Activated CD4-positive, alpha-beta memory T cell treated with anti-CD3 and anti-CD28 coated beads for 36 hours (primary cell): ENCODE measurements at regions of chr17 and their contacts with region 1.

Region 1: GRCh38 chr17:50200457-50201275 is 765 bp downstream of the COL1A1 start:
- DNase-seq: peak; percentile 89
- H3K4me3 Mint-ChIP-seq: peak overlapping the region; percentile 67
- H3K27ac Mint-ChIP-seq: no peak overlapping the region
- H3K4me1 Mint-ChIP-seq: peaks cover 19% of the 10 kb centered on the region
- H3K27me3 Mint-ChIP-seq: peaks cover 49% of the 10 kb centered on the region

Region 2: DNA sequence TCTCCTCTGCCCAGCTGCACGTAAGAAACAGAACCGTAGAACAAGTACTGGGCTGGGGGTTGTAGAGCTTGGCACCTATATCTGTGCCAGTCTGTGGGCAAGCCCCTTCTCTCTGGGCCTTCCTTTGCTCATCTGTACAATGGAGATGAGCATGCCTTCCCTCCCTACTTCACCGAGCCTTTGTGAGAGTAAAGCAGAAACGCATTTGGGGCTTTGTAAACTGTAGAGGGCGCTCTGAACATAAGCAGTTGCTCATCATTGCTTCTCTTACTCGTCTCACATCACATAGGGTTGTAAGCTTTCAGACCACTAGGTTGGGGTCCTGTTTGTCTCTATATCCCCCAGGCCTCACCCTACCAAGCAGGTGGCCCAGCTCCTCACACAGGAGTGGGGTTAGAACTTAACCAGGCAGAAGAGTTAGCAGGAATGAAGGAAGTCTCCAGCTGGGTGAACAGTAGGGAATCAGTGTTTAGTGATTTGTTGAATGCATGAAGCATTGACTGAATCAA is 85.8 kb before region 1 on chr17:
- CTCF ChIA-PET with region 1: interaction called, 9 read pairs
- POLR2A ChIA-PET with region 1: no interaction called
- intact Hi-C with region 1: loop called (anchors 1 kb)
- DNase-seq: peak; percentile 53
- H3K4me3 Mint-ChIP-seq: no peak overlapping the region
- H3K27ac Mint-ChIP-seq: no peak overlapping the region
- H3K4me1 Mint-ChIP-seq: peaks cover 10% of the 10 kb centered on the region
- H3K27me3 Mint-ChIP-seq: peaks cover 24% of the 10 kb centered on the region

Region 3: DNA sequence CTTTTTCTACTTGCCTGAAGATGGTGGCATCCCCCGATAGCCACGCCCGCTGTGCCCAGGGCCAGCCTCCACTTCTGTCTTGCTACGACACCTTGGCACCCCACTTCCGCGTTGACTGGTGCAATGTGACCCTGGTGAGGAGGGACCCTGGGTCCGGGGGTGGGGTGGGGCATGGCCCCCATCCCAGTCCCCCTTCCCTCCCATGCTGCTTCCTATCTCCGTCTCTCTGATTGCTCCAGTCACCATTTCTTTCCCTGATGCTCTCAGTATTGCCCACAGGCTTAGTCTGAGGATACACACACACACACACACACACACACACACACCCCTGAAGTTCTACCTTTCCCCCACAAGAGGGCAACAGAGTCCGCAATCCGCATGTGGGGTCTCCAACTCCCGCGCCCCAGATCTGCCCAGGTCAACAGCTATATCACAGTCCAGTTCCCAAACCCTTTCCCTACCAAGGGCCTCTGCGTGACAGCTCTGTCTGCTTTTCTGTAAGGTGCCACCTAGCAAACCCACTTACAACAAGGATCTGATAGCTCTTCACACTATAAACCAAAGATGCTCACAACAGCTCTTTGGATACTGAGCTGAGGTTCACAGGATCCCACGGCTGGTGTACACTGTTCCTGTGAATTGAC is 31.4 kb before region 1 on chr17:
- CTCF ChIA-PET with region 1: interaction called, 42 read pairs
- POLR2A ChIA-PET with region 1: interaction called, 3 read pairs
- intact Hi-C with region 1: loop called (anchors 1 kb)
- DNase-seq: peak; percentile 68
- H3K4me3 Mint-ChIP-seq: peak overlapping the region; percentile 52
- H3K27ac Mint-ChIP-seq: no peak overlapping the region
- H3K4me1 Mint-ChIP-seq: peaks cover 19% of the 10 kb centered on the region
- H3K27me3 Mint-ChIP-seq: no peaks in the 10 kb centered on the region

Region 4: DNA sequence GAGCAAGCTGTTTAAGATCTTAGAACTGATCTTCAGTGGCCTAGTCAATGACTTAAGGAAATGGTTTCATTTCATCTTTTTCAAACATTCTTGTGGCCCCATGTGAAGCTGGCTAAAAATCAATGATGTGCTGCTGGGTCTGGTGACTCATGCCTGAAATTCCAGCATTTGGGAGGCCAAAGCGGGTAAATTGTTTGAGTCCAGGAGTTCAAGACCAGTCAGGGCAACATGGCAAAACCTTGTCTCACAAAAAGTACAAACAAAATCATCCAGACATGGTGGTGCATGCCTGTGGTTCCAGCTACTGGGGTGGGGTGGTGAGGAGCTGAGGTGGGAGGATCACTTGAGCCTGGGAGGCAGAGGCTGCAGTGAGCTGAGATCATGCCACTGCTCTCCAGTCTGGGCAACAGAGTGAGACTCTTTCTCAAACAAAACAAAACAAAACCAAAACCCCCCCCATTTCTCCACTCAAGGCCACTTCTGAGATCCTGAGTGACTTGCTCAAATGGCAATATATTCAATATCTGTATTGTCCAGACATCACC is 18.2 kb after region 1 on chr17:
- CTCF ChIA-PET with region 1: interaction called, 70 read pairs
- POLR2A ChIA-PET with region 1: interaction called, 3 read pairs
- intact Hi-C with region 1: no loop called
- DNase-seq: no peak
- H3K4me3 Mint-ChIP-seq: no peak overlapping the region
- H3K27ac Mint-ChIP-seq: no peak overlapping the region
- H3K4me1 Mint-ChIP-seq: peaks cover 10% of the 10 kb centered on the region
- H3K27me3 Mint-ChIP-seq: peaks cover 1% of the 10 kb centered on the region

Region 5: GRCh38 chr17:50297407-50297865 is 96.8 kb after region 1 on chr17:
- CTCF ChIA-PET with region 1: interaction called, 254 read pairs
- POLR2A ChIA-PET with region 1: no interaction called
- intact Hi-C with region 1: loop called (anchors 1 kb)
- DNase-seq: peak; percentile 90
- H3K4me3 Mint-ChIP-seq: no peak overlapping the region
- H3K27ac Mint-ChIP-seq: no peak overlapping the region
- H3K4me1 Mint-ChIP-seq: peaks cover 8% of the 10 kb centered on the region
- H3K27me3 Mint-ChIP-seq: peaks cover 15% of the 10 kb centered on the region

Region 6: DNA sequence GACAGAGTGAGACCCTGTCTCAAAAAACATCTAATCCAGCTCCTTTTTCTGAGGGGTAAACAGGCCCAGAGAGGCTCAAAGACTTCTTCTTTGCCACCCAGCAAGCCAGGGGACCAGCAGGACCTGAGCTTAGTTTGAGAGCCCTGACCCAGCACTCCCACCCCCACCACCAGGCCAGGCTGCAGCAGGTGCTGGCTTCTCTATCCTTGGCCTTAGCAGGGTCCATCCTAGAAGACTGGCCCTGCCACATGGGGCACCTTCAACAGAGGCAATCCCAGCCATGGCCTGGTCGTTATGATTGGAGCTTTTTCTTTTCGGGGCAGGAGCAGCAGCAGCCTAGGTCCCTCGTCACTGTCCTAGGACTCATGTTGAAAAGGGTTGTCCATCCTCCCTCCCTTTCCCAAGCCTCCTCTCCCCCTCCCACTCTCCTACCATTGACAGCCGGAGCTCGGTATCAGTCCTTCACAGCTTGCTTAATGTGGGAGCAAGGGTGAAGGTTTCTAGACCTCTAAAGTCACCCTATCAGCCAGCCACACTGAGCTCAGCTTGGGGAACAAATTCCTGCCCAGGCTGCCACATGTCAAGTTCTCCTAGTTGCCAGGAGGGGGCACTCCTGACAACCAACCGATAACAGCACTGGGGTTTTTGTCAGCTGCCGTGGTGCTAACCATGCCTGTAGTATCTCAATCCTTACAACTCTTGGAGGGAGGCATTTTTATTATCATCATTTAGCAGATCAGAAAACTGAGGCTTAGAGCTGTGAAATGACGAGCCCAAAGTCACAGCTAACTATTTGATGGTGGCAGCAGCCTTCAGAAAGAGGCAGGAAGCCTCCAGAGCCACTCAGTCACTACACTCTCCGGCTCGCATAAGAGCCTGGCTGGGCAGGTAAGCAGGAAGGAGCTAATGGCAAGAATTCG is 161.2 kb after region 1 on chr17:
- CTCF ChIA-PET with region 1: interaction called, 13 read pairs
- POLR2A ChIA-PET with region 1: no interaction called
- intact Hi-C with region 1: no loop called
- DNase-seq: peak; percentile 75
- H3K4me3 Mint-ChIP-seq: no peak overlapping the region
- H3K27ac Mint-ChIP-seq: peak overlapping the region; percentile 75
- H3K4me1 Mint-ChIP-seq: peaks cover 9% of the 10 kb centered on the region
- H3K27me3 Mint-ChIP-seq: no peaks in the 10 kb centered on the region

Region 7: GRCh38 chr17:50681263-50682210 is 480.9 kb after region 1 on chr17:
- CTCF ChIA-PET with region 1: no interaction called
- POLR2A ChIA-PET with region 1: no interaction called
- intact Hi-C with region 1: no loop called
- DNase-seq: no peak
- H3K4me3 Mint-ChIP-seq: no peak overlapping the region
- H3K27ac Mint-ChIP-seq: no peak overlapping the region
- H3K4me1 Mint-ChIP-seq: peaks cover 7% of the 10 kb centered on the region
- H3K27me3 Mint-ChIP-seq: peaks cover 9% of the 10 kb centered on the region